Posterior cingulate gyrus (tissue), 11 donors: ENCODE measurements at regions of chr12 and their contacts with region 1.

Region 1: DNA sequence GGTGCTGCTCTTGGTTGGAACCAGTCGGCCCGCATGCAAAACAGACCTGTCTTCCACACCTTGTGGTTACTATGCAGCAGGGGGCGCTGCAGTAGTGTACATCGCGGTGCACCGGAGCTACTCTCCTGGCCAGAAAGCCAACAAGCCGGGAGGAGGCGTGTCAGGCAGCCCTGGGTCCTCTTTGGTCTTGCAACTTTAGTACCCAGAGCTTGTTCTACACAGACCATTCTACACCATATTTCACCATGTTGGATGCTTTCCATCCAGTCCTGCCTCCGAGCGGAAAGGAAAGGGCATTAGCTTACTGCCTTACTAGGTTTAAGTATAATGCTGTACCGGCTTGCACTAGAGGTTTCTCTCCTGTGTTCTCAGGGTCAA is 927 bp upstream of the TMTC2 start:
- DNase-seq: peak; percentile 90 to 99 (median 97)

Region 2: GRCh38 chr12:82486524-82487235 is 199.1 kb before region 1 on chr12:
- intact Hi-C with region 1: no loop called
- DNase-seq: no peak

Region 3: GRCh38 chr12:82527165-82527780 is 158.5 kb before region 1 on chr12:
- intact Hi-C with region 1: loop called (anchors 5 kb)
- DNase-seq: peak in 6 of 10 donors; percentile 31 to 79 (median 42)

Region 4: DNA sequence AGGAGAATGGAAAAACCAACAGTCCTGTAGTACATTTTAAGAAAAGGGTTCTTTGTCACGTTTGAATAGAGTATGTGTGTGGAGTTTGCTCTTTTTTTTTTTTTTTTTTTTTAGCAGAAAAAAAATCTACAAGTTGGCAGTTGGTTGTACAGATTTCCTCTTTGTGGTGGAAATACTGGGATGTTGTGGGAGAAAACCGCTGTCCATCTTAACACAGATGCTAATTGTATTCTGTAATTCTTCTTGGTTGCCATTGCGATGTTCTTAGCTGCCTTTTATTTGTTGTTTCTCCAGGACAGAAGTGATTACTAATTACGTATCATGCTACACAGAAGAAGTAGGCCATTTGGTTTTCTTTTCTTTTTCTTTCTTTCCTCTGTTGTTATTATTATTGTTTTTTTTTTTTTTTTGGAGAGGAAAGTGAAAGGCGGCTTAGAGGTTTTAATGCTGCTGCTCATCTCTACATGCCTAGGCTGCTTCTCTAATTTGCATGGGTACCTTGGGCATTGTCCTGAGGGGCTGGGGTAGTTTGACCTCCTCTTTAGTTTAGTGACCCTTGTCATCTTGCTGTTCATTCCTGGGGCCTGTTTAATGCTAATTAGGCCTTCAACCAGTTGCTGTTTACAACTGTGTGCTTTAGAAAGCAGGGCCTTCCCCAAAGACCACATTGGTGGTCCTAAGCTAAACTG is 95.7 kb after region 1 on chr12:
- intact Hi-C with region 1: loop called (anchors 5 kb)
- DNase-seq: no peak

Region 5: DNA sequence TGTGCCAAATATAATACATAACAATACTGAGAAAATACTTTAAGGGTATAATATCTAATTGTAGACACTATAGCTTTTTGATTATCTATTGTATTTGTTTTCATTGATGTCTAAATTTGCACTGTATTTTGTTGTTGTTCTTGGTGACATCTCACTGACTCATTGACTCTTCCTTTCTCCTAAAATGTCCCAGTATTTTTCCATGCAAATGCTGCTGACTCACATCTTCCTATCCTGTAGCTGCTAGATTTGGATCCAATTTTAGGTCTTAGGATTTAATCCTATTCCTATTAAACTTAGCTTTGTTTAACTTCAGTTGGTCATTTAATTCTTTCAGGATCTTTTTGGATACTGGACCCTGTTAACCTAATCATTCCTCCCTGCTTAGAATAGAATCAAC is 149.4 kb after region 1 on chr12:
- intact Hi-C with region 1: loop called (anchors 5 kb)
- DNase-seq: no peak

Region 6: GRCh38 chr12:83016218-83016835 is 330.5 kb after region 1 on chr12:
- intact Hi-C with region 1: loop called (anchors 10 kb)
- DNase-seq: peak in 2 of 10 donors; percentile 14 to 43

Region 7: GRCh38 chr12:83823431-83823963 is 1137.7 kb after region 1 on chr12:
- intact Hi-C with region 1: loop called (anchors 2 kb)
- DNase-seq: peak in 7 of 10 donors; percentile 9 to 88 (median 46)

Region 8: DNA sequence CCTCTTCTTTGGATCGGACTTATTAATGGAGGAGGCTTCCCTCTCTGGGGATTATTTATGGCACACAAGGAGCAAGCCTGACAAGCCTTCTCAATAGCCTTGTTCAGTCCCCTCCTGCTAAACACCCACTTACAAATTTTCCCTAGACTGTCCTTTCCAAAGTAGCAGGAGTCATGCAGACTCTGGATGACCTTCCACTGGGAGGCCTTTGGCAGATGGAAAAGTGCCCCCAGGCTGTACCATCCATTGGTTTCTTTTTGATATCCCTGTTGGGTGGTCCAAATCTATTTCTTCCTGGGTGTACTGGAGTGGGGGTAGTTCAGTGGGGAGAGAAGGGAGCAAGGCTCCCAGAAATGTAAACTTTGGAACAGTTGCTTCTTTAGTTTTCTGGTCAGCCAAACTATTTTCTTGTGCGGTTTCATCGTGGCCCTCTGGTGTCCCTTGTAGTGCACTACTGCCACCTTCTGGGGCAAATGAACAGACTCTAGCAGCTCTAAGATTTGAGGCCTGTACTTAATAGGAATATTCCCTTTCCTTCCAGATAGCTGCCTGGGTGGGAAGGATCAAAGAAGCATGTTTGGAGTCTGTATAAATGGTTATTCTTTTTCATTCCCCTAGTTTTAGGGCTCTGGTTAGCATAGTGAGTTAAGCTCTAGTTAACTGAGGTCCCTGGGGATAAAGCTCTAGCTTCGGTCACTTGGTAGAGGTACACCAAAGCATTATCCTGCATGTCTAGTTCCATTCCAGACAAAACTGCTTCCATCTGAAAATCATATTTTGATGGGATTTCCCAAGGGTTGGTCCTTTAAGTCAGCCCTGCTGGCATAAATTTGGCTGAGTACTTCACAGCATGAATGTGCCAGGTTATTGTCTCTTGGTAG is 1817.4 kb after region 1 on chr12:
- intact Hi-C with region 1: loop called (anchors 5 kb)
- DNase-seq: peak in 7 of 10 donors; percentile 28 to 86 (median 48)